Activated CD8-positive, alpha-beta T cell treated with anti-CD3 and anti-CD28 coated beads, Interleukin-2, amount 10 ng/mL, durations not matched to agents 7 days and 5 days (primary cell): ENCODE measurements at regions of chr11 and their contacts with region 1.

Region 1: GRCh38 chr11:64652586-64653387 is 61.8 kb downstream of the SLC22A12 start:
- DNase-seq: peak; percentile 83
- ATAC-seq: peak; percentile 79
- H3K4me3 Mint-ChIP-seq: no peak overlapping the region
- H3K27ac Mint-ChIP-seq: no peak overlapping the region
- H3K4me1 Mint-ChIP-seq: no peaks in the 10 kb centered on the region
- H3K27me3 Mint-ChIP-seq: no peaks in the 10 kb centered on the region

Region 2: GRCh38 chr11:64489831-64490441 is 162.9 kb before region 1 on chr11:
- CTCF ChIA-PET with region 1: interaction called, 10 read pairs
- POLR2A ChIA-PET with region 1: no interaction called
- DNase-seq: peak; percentile 58
- ATAC-seq: peak; percentile 70
- H3K4me3 Mint-ChIP-seq: no peak overlapping the region
- H3K27ac Mint-ChIP-seq: no peak overlapping the region
- H3K4me1 Mint-ChIP-seq: no peaks in the 10 kb centered on the region
- H3K27me3 Mint-ChIP-seq: peaks cover 16% of the 10 kb centered on the region

Region 3: GRCh38 chr11:64633555-64634159 is 19.1 kb before region 1 on chr11:
- CTCF ChIA-PET with region 1: interaction called, 10 read pairs
- POLR2A ChIA-PET with region 1: no interaction called
- DNase-seq: peak; percentile 48
- ATAC-seq: peak; percentile 70
- H3K4me3 Mint-ChIP-seq: no peak overlapping the region
- H3K27ac Mint-ChIP-seq: peak overlapping the region; percentile 78
- H3K4me1 Mint-ChIP-seq: peaks cover 26% of the 10 kb centered on the region
- H3K27me3 Mint-ChIP-seq: peaks cover 3% of the 10 kb centered on the region

Region 4: GRCh38 chr11:64834723-64835620 is 182.2 kb after region 1 on chr11:
- CTCF ChIA-PET with region 1: no interaction called
- POLR2A ChIA-PET with region 1: no interaction called
- DNase-seq: no peak
- ATAC-seq: no peak
- H3K4me3 Mint-ChIP-seq: no peak overlapping the region
- H3K27ac Mint-ChIP-seq: no peak overlapping the region
- H3K4me1 Mint-ChIP-seq: peaks cover 12% of the 10 kb centered on the region
- H3K27me3 Mint-ChIP-seq: no peaks in the 10 kb centered on the region